Activated CD4-positive, alpha-beta memory T cell treated with anti-CD3 and anti-CD28 coated beads for 36 hours (primary cell): ENCODE measurements at regions of chr17 and their contacts with region 1.

Region 1: GRCh38 chr17:9768381-9768934 is 22.9 kb downstream of the DHRS7C start:
- DNase-seq: no peak
- H3K4me3 Mint-ChIP-seq: no peak overlapping the region
- H3K27ac Mint-ChIP-seq: no peak overlapping the region
- H3K4me1 Mint-ChIP-seq: no peaks in the 10 kb centered on the region
- H3K27me3 Mint-ChIP-seq: peaks cover 10% of the 10 kb centered on the region

Region 2: DNA sequence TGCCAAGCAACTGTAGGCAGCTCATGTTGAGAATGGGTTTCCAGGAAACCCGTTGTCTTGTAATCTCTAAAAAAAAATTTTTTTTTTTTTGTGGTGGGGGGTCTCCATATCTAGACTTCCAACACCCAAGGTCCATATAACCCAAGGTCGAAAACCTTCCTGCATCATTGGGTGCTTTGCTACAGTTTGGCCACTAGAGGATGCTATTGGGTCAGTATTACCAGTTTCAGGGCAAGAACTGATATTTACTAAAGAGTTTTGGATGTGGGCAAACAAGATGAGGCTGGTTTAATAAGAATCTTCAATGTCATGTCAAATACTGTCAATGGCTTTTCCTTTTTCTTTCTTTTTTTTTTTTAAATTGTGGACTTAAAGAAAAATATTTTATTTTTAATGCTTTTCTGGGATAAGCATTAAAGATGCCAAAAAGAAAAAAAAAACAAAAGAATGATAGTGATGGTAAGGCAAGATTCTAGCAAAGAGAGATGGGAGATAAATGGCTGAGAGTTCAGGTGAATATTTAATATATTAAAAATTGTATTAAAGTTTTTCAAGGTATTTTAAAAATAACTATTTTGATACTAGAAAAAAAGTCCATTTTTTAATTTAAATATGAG is 39.3 kb before region 1 on chr17:
- CTCF ChIA-PET with region 1: interaction called, 17 read pairs
- POLR2A ChIA-PET with region 1: no interaction called
- intact Hi-C with region 1: loop called (anchors 1 kb)
- DNase-seq: no peak
- H3K4me3 Mint-ChIP-seq: no peak overlapping the region
- H3K27ac Mint-ChIP-seq: no peak overlapping the region
- H3K4me1 Mint-ChIP-seq: no peaks in the 10 kb centered on the region
- H3K27me3 Mint-ChIP-seq: peaks cover 7% of the 10 kb centered on the region

Region 3: DNA sequence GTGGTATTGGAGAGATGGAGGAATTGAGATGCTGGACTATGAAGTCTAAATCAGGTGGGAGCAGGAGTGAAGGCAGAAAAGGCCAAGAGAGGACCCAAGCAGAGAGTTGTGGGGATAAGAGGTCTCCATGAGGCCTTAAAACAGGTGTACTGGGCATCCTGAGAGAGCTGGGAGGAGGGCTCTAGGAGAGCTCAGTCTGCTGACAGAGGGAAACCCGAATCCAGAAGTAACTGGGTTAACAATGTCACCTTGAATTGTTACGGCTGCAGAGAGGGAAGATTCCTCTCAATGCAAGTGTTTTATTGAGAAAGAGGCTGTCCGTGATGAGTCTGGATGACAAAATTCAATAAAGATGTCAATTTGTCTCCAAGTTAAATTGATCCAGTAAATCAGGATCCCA is 14.6 kb after region 1 on chr17:
- CTCF ChIA-PET with region 1: no interaction called
- POLR2A ChIA-PET with region 1: no interaction called
- intact Hi-C with region 1: no loop called
- DNase-seq: no peak
- H3K4me3 Mint-ChIP-seq: no peak overlapping the region
- H3K27ac Mint-ChIP-seq: no peak overlapping the region
- H3K4me1 Mint-ChIP-seq: no peaks in the 10 kb centered on the region
- H3K27me3 Mint-ChIP-seq: peaks cover 14% of the 10 kb centered on the region